AG04449 (cell line): ENCODE measurements at regions of chr2 and their contacts with region 1.

Region 1: GRCh38 chr2:225668606-225669266 is 269.2 kb downstream of the NYAP2 start:
- DNase-seq: peak; percentile 21
- H3K4me3 ChIP-seq: no peak overlapping the region
- CTCF ChIP-seq: peak; percentile 78

Region 2: DNA sequence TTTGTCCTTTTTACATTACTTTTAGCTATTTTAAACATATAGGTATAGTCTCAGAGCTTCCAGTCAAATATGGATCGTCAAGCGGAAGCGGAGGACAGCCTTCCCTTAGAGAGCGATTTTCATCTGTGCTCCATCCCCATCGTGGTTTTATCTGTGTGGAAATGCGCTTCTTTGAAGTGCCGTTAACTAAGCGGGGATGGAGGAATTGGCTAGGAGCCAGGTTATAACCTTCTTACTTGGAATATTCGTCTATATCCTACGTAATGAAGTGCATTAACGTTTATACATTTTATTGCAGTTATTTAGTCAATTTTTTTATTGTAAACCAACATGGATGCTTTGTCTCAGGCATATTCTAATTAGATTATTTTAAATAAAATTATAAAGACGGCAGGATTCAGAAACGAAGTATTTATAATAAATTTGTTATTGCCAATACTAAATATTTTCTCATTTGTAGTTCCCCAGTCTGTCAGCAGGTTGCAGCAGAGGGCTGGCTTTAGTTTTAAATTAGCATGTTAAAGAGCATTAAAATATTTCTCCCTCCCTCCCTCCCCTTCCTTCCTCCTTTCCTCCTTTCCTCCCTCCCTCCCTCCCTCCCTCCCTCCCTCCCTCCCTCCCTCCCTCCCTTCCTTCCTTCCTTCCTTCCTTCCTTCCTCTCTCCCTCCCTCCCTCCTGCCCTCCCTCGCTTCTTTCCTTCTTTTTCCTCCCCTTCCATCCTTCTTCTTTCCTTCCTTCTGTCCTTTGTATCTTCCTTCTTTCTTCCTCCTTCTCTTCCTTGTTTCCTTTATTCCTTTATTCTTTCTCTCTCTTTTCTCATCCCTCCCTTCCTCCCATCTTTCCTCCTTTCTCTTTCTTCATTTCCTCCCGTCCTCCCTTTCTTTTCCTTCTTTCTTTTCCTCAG is 545.9 kb before region 1 on chr2:
- CTCF ChIA-PET with region 1: interaction called, 10 read pairs
- POLR2A ChIA-PET with region 1: no interaction called
- DNase-seq: no peak
- H3K4me3 ChIP-seq: no peak overlapping the region
- CTCF ChIP-seq: peak; percentile 36

Region 3: DNA sequence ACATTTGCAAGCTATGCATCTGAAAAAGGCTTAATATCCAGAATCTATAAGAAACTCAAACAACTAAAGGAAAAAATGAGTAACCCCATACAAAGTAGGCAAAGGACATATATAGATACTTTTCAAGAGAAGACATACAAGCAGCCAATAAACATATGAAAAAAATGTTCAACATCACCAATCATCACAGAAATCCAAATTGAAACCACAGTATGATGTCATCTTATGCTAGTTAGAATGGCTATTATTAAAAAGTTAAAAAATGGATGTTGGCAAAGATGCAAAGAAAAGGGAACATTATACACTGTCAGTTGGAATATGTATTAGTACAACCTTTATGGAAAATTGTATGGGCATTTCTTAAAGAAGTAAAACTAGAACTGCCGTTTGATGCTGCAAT is 143.9 kb before region 1 on chr2:
- CTCF ChIA-PET with region 1: no interaction called
- POLR2A ChIA-PET with region 1: no interaction called
- DNase-seq: no peak
- H3K4me3 ChIP-seq: no peak overlapping the region
- CTCF ChIP-seq: no peak

Region 4: GRCh38 chr2:226979004-226979403 is 1310.3 kb after region 1 on chr2:
- CTCF ChIA-PET with region 1: interaction called, 12 read pairs
- POLR2A ChIA-PET with region 1: no interaction called
- DNase-seq: no peak
- H3K4me3 ChIP-seq: no peak overlapping the region
- CTCF ChIP-seq: no peak

Region 5: GRCh38 chr2:226984750-226985582 is 1316.2 kb after region 1 on chr2:
- CTCF ChIA-PET with region 1: interaction called, 12 read pairs
- POLR2A ChIA-PET with region 1: no interaction called
- DNase-seq: peak; percentile 56
- H3K4me3 ChIP-seq: no peak overlapping the region
- CTCF ChIP-seq: peak; percentile 45

Region 6: GRCh38 chr2:227106845-227107759 is 1438.4 kb after region 1 on chr2:
- CTCF ChIA-PET with region 1: interaction called, 19 read pairs
- POLR2A ChIA-PET with region 1: no interaction called
- DNase-seq: no peak
- H3K4me3 ChIP-seq: no peak overlapping the region
- CTCF ChIP-seq: peak; percentile 76